IMR-90 (cell line): ENCODE measurements at regions of chr6 and their contacts with region 1.

Region 1: GRCh38 chr6:129251669-129252376 is 368.9 kb downstream of the LAMA2 start:
- DNase-seq: peak; percentile 75
- ATAC-seq: peak; percentile 81
- H3K4me3 ChIP-seq: no peak overlapping the region
- H3K27ac ChIP-seq: no peak overlapping the region
- H3K4me1 ChIP-seq: no peaks in the 10 kb centered on the region; the same call in 1 of the 2 replicates
- H3K27me3 ChIP-seq: no peaks in the 10 kb centered on the region
- CTCF ChIP-seq: peak; percentile 80
- POLR2A ChIP-seq: no peak
- RAD21 ChIP-seq: peak; percentile 89

Region 2: GRCh38 chr6:128731249-128732165 is 520.3 kb before region 1 on chr6:
- CTCF ChIA-PET with region 1: no interaction called
- POLR2A ChIA-PET with region 1: no interaction called
- dilution Hi-C with region 1: no loop called
- in situ Hi-C with region 1: loop called (anchors 10 kb)
- intact Hi-C with region 1: loop called (anchors 5 kb)
- DNase-seq: peak; percentile 66
- ATAC-seq: peak; percentile 86
- H3K4me3 ChIP-seq: no peak overlapping the region
- H3K27ac ChIP-seq: no peak overlapping the region
- H3K4me1 ChIP-seq: no peaks in the 10 kb centered on the region
- H3K27me3 ChIP-seq: no peaks in the 10 kb centered on the region; the same call in 1 of the 2 replicates
- CTCF ChIP-seq: peak; percentile 80
- POLR2A ChIP-seq: 0 out of 2 replicates have a peak, but pooled peaks have one; percentile 23
- RAD21 ChIP-seq: peak; percentile 93

Region 3: GRCh38 chr6:128807577-128807976 is 444.2 kb before region 1 on chr6:
- CTCF ChIA-PET with region 1: interaction called, 3 read pairs
- POLR2A ChIA-PET with region 1: no interaction called
- dilution Hi-C with region 1: no loop called
- in situ Hi-C with region 1: loop called (anchors 10 kb)
- intact Hi-C with region 1: loop called (anchors 1 kb)
- DNase-seq: peak; percentile 60
- ATAC-seq: peak; percentile 59
- H3K4me3 ChIP-seq: no peak overlapping the region
- H3K27ac ChIP-seq: no peak overlapping the region
- H3K4me1 ChIP-seq: peaks cover 2% of the 10 kb centered on the region
- H3K27me3 ChIP-seq: peaks cover 2% of the 10 kb centered on the region; the same call in 1 of the 2 replicates
- CTCF ChIP-seq: peak; percentile 61
- POLR2A ChIP-seq: no peak
- RAD21 ChIP-seq: peak; percentile 69

Region 4: DNA sequence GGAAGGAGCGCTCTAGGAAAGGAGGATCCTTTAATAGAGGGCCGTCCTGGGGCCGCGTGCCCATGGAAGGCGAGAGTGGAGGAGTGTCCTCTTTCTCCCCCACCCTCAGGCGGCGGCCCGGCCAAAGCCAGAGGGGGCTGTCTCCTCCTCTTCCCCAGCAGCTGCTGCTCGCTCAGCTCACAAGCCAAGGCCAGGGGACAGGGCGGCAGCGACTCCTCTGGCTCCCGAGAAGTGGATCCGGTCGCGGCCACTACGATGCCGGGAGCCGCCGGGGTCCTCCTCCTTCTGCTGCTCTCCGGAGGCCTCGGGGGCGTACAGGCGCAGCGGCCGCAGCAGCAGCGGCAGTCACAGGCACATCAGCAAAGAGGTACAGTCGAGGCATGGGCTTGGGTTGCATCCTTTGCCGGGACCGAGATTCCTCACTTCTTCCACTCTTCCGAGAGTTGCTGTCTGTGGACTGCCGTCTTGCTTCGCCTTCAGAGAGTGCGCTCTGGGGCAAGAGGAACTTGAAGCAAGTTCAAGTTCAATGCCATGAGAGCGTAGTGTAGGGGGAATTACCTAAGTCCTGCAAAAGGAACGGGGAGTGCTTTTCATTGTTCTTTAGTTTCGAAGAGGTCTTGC is 368.7 kb before region 1 on chr6 and contains the start of gene LAMA2:
- CTCF ChIA-PET with region 1: no interaction called
- POLR2A ChIA-PET with region 1: no interaction called
- dilution Hi-C with region 1: no loop called
- in situ Hi-C with region 1: no loop called
- intact Hi-C with region 1: loop called (anchors 2 kb)
- DNase-seq: peak; percentile 55
- ATAC-seq: peak; percentile 99
- H3K4me3 ChIP-seq: peak within 1 kb of the TSS; percentile 51
- H3K27ac ChIP-seq: peak within 1 kb of the TSS; percentile 68
- H3K4me1 ChIP-seq: peaks cover 2% of the 10 kb centered on the region
- H3K27me3 ChIP-seq: no peaks in the 10 kb centered on the region
- CTCF ChIP-seq: 0 out of 2 replicates have a peak, but pooled peaks have one; percentile 6
- POLR2A ChIP-seq: no peak
- RAD21 ChIP-seq: no peak
- total RNA-seq, gene LAMA2: 12.5 and 13.3 TPM in 2 replicates

Region 5: DNA sequence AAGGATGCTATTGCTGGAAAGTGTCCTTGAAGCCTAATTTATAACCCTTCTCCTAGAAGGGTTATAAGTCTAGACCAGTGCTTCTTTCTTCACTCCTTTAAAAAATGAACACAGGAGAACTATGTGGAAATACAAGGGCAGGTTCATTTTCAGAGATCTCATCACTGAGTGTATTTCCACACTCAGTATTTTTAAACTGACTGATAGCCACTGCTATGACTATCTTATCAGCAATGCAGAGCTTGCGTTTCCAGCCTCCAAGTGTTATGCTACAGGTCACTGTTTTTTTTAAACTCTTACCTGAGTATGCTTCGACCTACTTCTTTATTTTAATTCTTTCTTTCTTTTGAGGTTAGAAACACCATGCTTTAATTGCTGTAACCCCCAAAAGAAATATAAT is 139.1 kb after region 1 on chr6:
- CTCF ChIA-PET with region 1: no interaction called
- POLR2A ChIA-PET with region 1: no interaction called
- dilution Hi-C with region 1: no loop called
- in situ Hi-C with region 1: no loop called
- intact Hi-C with region 1: no loop called
- DNase-seq: peak; percentile 12
- ATAC-seq: no peak
- H3K4me3 ChIP-seq: no peak overlapping the region
- H3K27ac ChIP-seq: no peak overlapping the region
- H3K4me1 ChIP-seq: no peaks in the 10 kb centered on the region
- H3K27me3 ChIP-seq: peaks cover 10% of the 10 kb centered on the region
- CTCF ChIP-seq: no peak
- POLR2A ChIP-seq: no peak
- RAD21 ChIP-seq: no peak

Region 6: GRCh38 chr6:129575378-129576118 is 323.7 kb after region 1 on chr6:
- CTCF ChIA-PET with region 1: no interaction called
- POLR2A ChIA-PET with region 1: no interaction called
- dilution Hi-C with region 1: no loop called
- in situ Hi-C with region 1: no loop called
- intact Hi-C with region 1: no loop called
- DNase-seq: peak; percentile 72
- ATAC-seq: peak; percentile 92
- H3K4me3 ChIP-seq: peak overlapping the region; percentile 22; the same call in 1 of the 2 replicates
- H3K27ac ChIP-seq: no peak overlapping the region
- H3K4me1 ChIP-seq: peaks cover 2% of the 10 kb centered on the region; the same call in 1 of the 2 replicates
- H3K27me3 ChIP-seq: no peaks in the 10 kb centered on the region
- CTCF ChIP-seq: peak; percentile 76
- POLR2A ChIP-seq: no peak
- RAD21 ChIP-seq: peak; percentile 89